A549 (cell line): ENCODE measurements at regions of chr6 and their contacts with region 1.

Region 1: GRCh38 chr6:31597006-31597405 is 4.2 kb upstream of the NCR3 start:
- DNase-seq: peak; percentile 39 to 40
- ATAC-seq: peak; percentile 77 to 85
- H3K4me3 ChIP-seq: no peak overlapping the region
- H3K27ac ChIP-seq: no peak overlapping the region
- H3K4me1 ChIP-seq: no peaks in the 10 kb centered on the region
- CTCF ChIP-seq: peak; percentile 37; the same call in 2 of the 3 replicates
- EP300 ChIP-seq: no peak
- POLR2A ChIP-seq: no peak
- RAD21 ChIP-seq: no peak

Region 2: GRCh38 chr6:31493875-31494694 is 102.9 kb before region 1 on chr6:
- CTCF ChIA-PET with region 1: interaction called, 11 read pairs
- POLR2A ChIA-PET with region 1: interaction called, 3 read pairs
- DNase-seq: peak; percentile 67 to 70
- ATAC-seq: peak; percentile 74 to 84
- H3K4me3 ChIP-seq: peak overlapping the region; percentile 56
- H3K27ac ChIP-seq: peak overlapping the region; percentile 72 to 90
- H3K4me1 ChIP-seq: peaks cover 10% of the 10 kb centered on the region; the same call in 2 of the 3 replicates
- CTCF ChIP-seq: peak; percentile 65
- EP300 ChIP-seq: no peak
- POLR2A ChIP-seq: no peak
- RAD21 ChIP-seq: peak; percentile 61 to 65

Region 3: GRCh38 chr6:31559958-31560696 is 36.9 kb before region 1 on chr6:
- CTCF ChIA-PET with region 1: interaction called, 331 read pairs
- POLR2A ChIA-PET with region 1: no interaction called
- DNase-seq: peak in 1 of 2 experiments; percentile 12
- ATAC-seq: peak; percentile 64 to 80; a peak in 3 of 6 replicates
- H3K4me3 ChIP-seq: no peak overlapping the region
- H3K27ac ChIP-seq: peak overlapping the region; percentile 33 to 74; a peak in 4 of 6 replicates
- H3K4me1 ChIP-seq: peaks cover 27% of the 10 kb centered on the region
- CTCF ChIP-seq: no peak
- EP300 ChIP-seq: no peak
- POLR2A ChIP-seq: no peak
- RAD21 ChIP-seq: no peak

Region 4: GRCh38 chr6:31580807-31581433 is 16.1 kb before region 1 on chr6:
- CTCF ChIA-PET with region 1: interaction called, 338 read pairs
- POLR2A ChIA-PET with region 1: interaction called, 4 read pairs
- DNase-seq: peak; percentile 64 to 68
- ATAC-seq: peak; percentile 94 to 99
- H3K4me3 ChIP-seq: peak overlapping the region; percentile 63
- H3K27ac ChIP-seq: peak overlapping the region; percentile 73 to 94
- H3K4me1 ChIP-seq: peaks cover 6% of the 10 kb centered on the region; the same call in 1 of the 3 replicates
- CTCF ChIP-seq: peak; percentile 84
- EP300 ChIP-seq: no peak
- POLR2A ChIP-seq: peak; percentile 44
- RAD21 ChIP-seq: peak; percentile 22 to 58; a peak in 4 of 5 replicates

Region 5: DNA sequence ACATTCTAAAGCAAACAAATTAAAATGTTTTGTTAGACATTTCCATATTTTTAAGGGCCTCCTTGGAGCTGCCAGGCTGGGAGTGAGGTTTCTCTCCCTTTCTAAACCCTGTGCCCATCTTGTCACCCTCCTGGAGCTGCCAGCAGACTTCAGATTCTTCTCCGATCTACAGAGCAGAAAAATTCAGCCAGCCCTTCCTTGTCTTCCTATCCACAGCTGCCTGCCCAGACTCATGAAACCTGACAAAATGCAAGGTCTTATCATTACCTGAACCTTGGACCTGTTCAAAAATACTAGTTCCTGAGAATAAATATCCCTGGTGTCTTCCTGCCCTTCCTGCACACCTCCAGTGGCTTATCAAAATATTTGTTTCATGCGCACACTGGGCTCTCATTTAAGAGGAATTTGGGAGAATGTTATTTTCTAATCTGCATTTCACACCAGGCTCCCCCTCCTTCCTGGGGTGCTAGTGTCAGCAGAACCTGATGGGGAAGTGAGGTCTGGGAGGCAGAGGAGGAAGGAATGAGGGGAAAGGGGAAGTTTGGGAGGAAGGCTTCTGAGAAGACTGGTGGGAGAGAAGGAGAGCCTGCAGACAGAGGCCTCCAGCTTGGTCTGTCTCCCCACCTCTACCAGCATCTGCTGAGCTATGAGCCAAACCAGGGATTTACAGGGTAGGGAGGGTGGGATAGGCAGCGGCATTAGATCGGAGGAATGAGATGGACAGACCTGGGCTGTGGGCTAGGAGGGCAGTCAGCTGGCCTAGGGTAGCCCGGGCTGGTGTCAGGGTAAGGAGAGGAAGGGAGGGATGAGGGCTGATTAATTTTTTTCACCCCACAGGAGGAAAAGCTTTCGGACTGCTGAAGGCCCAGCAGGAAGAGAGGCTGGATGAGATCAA is 17.9 kb after region 1 on chr6 and contains the start of gene AIF1:
- CTCF ChIA-PET with region 1: interaction called, 28 read pairs
- POLR2A ChIA-PET with region 1: no interaction called
- DNase-seq: no peak
- ATAC-seq: no peak
- H3K4me3 ChIP-seq: no peak within 1 kb of the TSS
- H3K27ac ChIP-seq: no peak within 1 kb of the TSS
- H3K4me1 ChIP-seq: peaks cover 4% of the 10 kb centered on the region; the same call in 2 of the 3 replicates
- CTCF ChIP-seq: no peak
- EP300 ChIP-seq: no peak
- POLR2A ChIP-seq: no peak
- RAD21 ChIP-seq: no peak
- polyA plus RNA-seq, gene AIF1: not detected in 2 replicates